ENCODE measurements at regions of chr13 and their contacts with region 1.

Region 1: GRCh38 chr13:26482451-26483197 is 74.9 kb upstream of the WASF3 start:
- DNase-seq: peak; percentile 87
- H3K4me3 ChIP-seq: peak overlapping the region; percentile 2
- H3K27ac ChIP-seq: no peak overlapping the region
- H3K4me1 ChIP-seq: peaks cover 14% of the 10 kb centered on the region
- CTCF ChIP-seq: peak; percentile 90

Region 2: GRCh38 chr13:26221721-26222519 is 260.7 kb before region 1 on chr13 and contains the start of gene RNF6:
- CTCF ChIA-PET with region 1: no interaction called
- POLR2A ChIA-PET with region 1: no interaction called
- intact Hi-C with region 1: loop called (anchors 1 kb)
- DNase-seq: peak; percentile 97
- H3K4me3 ChIP-seq: peak within 1 kb of the TSS; percentile 81
- H3K27ac ChIP-seq: peak within 1 kb of the TSS; percentile 86
- H3K4me1 ChIP-seq: peaks cover 23% of the 10 kb centered on the region
- CTCF ChIP-seq: 0 out of 2 replicates have a peak, but pooled peaks have one; percentile 23
- total RNA-seq, gene RNF6: 20.4 and 25.6 TPM in 2 replicates

Region 3: DNA sequence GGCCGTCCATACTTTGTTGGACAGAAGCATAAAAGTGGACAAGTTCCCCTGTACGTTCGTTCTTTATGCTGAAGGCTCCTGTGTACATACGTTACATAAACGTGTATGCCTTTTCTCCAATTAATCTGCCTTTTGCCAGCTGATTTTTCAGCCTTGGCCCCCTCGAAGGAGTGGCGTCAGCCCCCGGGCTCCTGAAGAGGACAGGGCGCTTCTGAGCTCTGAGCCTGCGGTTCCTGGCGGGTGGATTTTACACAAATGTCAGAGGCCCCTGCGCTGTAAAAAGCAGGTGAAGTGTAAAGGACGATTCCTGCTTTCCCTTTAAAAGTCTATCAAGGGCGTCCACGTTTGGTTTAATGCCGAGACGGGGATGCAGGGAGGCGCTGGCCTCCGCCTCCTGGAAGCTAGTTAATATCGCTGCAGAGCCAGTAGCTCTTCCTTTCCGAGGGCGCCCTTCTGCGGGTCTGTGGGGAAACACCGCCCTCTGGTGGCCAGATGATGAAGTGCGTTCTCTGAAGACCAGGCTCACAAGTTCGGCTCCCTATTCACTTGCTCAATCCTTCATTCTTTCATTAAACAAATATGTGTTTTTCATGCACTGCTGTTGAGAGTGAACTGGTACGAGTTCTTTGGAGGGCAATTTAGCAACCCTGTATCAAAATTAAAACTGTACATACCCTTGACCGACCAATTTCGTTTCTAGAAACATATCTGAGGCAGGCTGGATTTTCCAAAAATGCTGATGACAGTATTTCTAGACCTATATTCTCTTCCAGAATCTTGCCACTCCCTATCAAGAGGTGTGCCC is 216.0 kb after region 1 on chr13:
- CTCF ChIA-PET with region 1: interaction called, 3 read pairs
- POLR2A ChIA-PET with region 1: no interaction called
- intact Hi-C with region 1: loop called (anchors 5 kb)
- DNase-seq: peak; percentile 73
- H3K4me3 ChIP-seq: no peak overlapping the region
- H3K27ac ChIP-seq: no peak overlapping the region
- H3K4me1 ChIP-seq: no peaks in the 10 kb centered on the region
- CTCF ChIP-seq: peak; percentile 97

Region 4: DNA sequence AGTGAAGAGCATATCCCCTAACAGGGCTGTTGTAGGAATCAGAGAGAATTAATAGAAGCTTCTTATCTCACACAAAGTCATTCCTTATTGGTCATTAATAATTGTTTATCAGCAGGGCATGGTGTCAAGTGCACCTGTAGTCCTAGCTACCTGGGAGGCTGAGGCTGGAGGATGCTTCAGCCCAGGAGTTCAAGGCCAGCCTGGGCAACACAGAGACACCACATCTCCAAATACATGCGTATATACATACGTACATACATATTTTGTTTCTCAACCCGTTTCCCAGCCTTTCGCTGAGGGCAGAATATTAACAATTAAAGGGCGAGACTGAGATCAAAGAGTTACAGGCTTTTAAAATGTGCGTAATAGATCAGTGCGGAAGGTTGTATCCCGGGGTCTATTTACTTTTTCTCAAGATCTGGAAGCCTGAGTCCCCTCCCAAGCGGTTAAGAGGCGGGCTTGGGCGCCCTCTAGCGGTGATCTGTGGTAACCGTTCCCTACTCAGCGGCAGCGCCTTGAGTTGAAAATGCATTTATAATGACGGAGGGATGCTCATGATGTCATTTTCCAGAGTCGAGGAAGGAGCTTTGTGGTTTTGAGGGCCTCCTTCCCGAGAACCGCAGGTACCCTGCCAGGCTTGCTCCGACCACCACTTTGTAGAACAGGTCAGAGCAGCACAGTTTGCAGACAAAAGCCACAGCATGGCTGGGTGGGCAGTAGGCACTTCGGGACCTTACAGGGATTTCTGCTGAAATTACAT is 447.5 kb after region 1 on chr13:
- CTCF ChIA-PET with region 1: no interaction called
- POLR2A ChIA-PET with region 1: no interaction called
- intact Hi-C with region 1: loop called (anchors 10 kb)
- DNase-seq: peak; percentile 72
- H3K4me3 ChIP-seq: peak overlapping the region; percentile 33
- H3K27ac ChIP-seq: no peak overlapping the region
- H3K4me1 ChIP-seq: peaks cover 5% of the 10 kb centered on the region
- CTCF ChIP-seq: peak; percentile 98

Measured in OCI-LY7 (cell line).